ENCODE measurements at regions of chr14 and their contacts with region 1.

Region 1: GRCh38 chr14:40229676-40230075 is 797.4 kb upstream of the FBXO33 start:
- DNase-seq: peak; percentile 36
- ATAC-seq: peak; percentile 29; the same call in 1 of the 2 replicates
- H3K4me3 ChIP-seq: no peak overlapping the region
- H3K27ac ChIP-seq: no peak overlapping the region
- H3K4me1 ChIP-seq: peaks cover 3% of the 10 kb centered on the region; the same call in 1 of the 2 replicates
- H3K27me3 ChIP-seq: no peaks in the 10 kb centered on the region
- CTCF ChIP-seq: no peak

Region 2: DNA sequence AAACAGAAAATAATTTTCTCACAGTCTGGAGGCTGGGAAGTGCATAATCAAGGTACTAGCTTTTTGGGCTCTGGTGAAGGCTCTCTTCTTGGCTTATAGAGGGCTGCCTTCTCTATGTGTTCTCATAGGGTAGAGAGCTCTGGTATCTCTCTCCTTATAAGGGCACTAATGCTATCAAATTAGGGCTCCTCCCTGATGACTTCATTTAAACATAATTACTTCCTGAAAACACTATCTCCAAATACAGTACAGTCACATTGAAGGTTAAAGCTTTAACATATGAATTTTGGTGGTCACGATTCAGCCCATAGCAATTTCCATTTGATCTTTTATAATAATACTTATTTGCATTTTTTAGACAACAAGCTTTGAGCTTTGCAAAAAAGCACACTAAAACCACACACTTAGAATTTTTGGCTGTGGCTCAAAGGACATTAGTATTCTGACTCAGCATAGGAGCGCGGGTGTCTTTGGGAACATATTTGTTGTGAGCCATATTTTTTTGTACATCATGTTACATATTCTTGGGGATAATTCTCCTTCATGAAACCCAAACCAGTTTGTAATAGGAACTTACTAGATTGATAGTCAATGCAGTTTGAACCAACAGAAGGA is 10.7 kb after region 1 on chr14:
- CTCF ChIA-PET with region 1: no interaction called
- POLR2A ChIA-PET with region 1: no interaction called
- intact Hi-C with region 1: loop called (anchors 2 kb)
- DNase-seq: peak; percentile 44
- ATAC-seq: peak; percentile 42; the same call in 1 of the 2 replicates
- H3K4me3 ChIP-seq: no peak overlapping the region
- H3K27ac ChIP-seq: no peak overlapping the region
- H3K4me1 ChIP-seq: 0 out of 2 replicates have a peak, but pooled peaks cover 6% of the 10 kb centered on the region
- H3K27me3 ChIP-seq: no peaks in the 10 kb centered on the region
- CTCF ChIP-seq: no peak